ENCODE measurements at regions of chr6 and their contacts with region 1.

Region 1: GRCh38 chr6:111210194-111210728 is 123.0 kb downstream of the SLC16A10 start:
- DNase-seq: peak in 4 of 9 experiments; percentile 29 to 73 (median 58)
- ATAC-seq: peak; percentile 83
- H3K4me3 ChIP-seq: no peak overlapping the region
- H3K4me3 Mint-ChIP-seq: no peak overlapping the region
- H3K27ac ChIP-seq: no peak overlapping the region
- H3K27ac Mint-ChIP-seq: peak overlapping the region; percentile 10
- H3K4me1 ChIP-seq: no peaks in the 10 kb centered on the region
- H3K4me1 Mint-ChIP-seq: peaks cover 5% of the 10 kb centered on the region
- H3K27me3 ChIP-seq: no peaks in the 10 kb centered on the region
- H3K27me3 Mint-ChIP-seq: no peaks in the 10 kb centered on the region
- CTCF ChIP-seq: peak; percentile 77

Region 2: GRCh38 chr6:110528101-110528929 is 681.9 kb before region 1 on chr6:
- CTCF ChIA-PET with region 1: no interaction called
- POLR2A ChIA-PET with region 1: no interaction called
- intact Hi-C with region 1: loop called in 1 of 2 experiments (anchors 2 kb)
- DNase-seq: peak in 7 of 9 experiments; percentile 22 to 75 (median 53)
- ATAC-seq: peak; percentile 56
- H3K4me3 ChIP-seq: no peak overlapping the region
- H3K4me3 Mint-ChIP-seq: no peak overlapping the region
- H3K27ac ChIP-seq: no peak overlapping the region
- H3K27ac Mint-ChIP-seq: no peak overlapping the region
- H3K4me1 ChIP-seq: no peaks in the 10 kb centered on the region
- H3K4me1 Mint-ChIP-seq: no peaks in the 10 kb centered on the region
- H3K27me3 ChIP-seq: no peaks in the 10 kb centered on the region
- H3K27me3 Mint-ChIP-seq: peaks cover 3% of the 10 kb centered on the region
- CTCF ChIP-seq: peak; percentile 87

Region 3: DNA sequence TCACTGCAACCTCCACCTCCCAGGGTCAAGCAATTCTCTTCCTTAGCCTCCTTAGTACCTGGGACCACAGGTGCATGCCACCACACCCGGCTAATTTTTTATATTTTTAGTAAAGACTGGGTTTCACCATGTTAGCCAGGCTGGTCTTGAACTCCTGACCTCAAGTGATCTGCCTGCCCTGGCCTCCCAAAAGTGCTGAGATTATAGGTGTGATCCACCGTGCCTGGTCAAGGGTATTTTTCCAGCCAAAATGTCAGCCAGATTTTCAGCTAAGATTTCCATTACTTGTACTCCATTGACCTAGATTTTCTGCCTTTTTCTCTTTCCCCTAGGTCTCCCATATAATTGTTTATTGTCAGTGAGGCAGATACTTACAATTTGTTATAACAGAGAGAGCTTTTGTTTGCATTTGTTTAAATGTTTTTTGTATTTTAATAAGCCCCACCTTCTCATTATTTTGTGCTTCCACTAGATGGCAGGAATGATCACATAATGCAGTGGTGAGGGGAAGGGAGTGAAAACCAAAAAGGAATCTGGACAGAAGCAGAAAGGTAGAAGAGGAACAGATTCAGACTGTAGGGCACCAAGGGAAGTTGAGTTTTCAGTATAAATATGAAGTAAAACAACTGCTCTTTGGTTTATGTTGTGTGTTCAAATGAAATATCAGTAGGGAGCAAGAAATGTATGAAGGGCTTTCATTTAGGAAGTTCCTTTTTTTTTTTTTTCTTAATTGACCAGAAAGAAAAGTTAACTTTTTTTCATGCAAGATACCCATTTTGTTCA is 198.7 kb before region 1 on chr6:
- CTCF ChIA-PET with region 1: interaction called, 9 read pairs
- POLR2A ChIA-PET with region 1: no interaction called
- intact Hi-C with region 1: loop called (anchors 1 kb)
- DNase-seq: peak in 2 of 9 experiments; percentile 45 to 62
- ATAC-seq: peak; percentile 69
- H3K4me3 ChIP-seq: no peak overlapping the region
- H3K4me3 Mint-ChIP-seq: no peak overlapping the region
- H3K27ac ChIP-seq: no peak overlapping the region
- H3K27ac Mint-ChIP-seq: no peak overlapping the region
- H3K4me1 ChIP-seq: no peaks in the 10 kb centered on the region
- H3K4me1 Mint-ChIP-seq: peaks cover 4% of the 10 kb centered on the region
- H3K27me3 ChIP-seq: no peaks in the 10 kb centered on the region
- H3K27me3 Mint-ChIP-seq: no peaks in the 10 kb centered on the region
- CTCF ChIP-seq: peak; percentile 71

Region 4: GRCh38 chr6:111052036-111052570 is 158.2 kb before region 1 on chr6:
- CTCF ChIA-PET with region 1: interaction called, 118 read pairs
- POLR2A ChIA-PET with region 1: no interaction called
- intact Hi-C with region 1: loop called (anchors 1 kb)
- DNase-seq: no peak
- ATAC-seq: no peak
- H3K4me3 ChIP-seq: no peak overlapping the region
- H3K4me3 Mint-ChIP-seq: no peak overlapping the region
- H3K27ac ChIP-seq: no peak overlapping the region
- H3K27ac Mint-ChIP-seq: no peak overlapping the region
- H3K4me1 ChIP-seq: no peaks in the 10 kb centered on the region
- H3K4me1 Mint-ChIP-seq: no peaks in the 10 kb centered on the region
- H3K27me3 ChIP-seq: no peaks in the 10 kb centered on the region
- H3K27me3 Mint-ChIP-seq: peaks cover 2% of the 10 kb centered on the region
- CTCF ChIP-seq: no peak

Region 5: DNA sequence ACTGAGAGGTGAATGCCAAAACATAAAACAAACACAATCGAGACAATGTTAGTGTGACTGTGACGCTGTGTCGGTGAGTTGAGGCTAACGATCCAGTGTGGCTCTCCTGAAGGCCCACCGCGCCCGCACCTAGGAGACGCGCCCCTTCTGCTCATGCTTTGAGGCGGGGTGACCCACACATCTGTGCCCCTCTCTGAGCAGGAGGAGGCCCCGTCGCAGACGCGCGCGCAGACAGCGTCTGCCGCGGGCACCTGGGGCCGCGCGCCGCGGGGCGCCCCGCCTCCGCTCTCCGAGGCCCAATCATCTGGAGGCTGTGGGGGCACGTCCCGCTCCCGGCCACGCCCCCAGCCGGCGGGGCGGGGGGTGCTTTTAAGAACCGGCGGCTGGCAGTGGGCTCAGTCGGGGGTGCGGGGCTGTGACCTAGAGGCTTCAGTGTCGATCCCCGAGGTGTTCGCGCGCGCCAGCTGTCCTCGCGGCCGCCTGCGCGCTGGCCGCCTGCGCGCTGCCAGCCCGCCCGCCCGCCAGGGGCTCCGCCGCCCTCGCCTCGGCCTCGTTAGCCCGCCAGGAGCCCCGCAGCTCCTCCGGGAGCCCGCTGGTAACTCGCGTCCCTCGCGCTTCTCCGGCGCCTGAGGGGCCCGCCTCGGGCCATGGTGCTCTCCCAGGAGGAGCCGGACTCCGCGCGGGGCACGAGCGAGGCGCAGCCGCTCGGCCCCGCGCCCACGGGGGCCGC is 123.0 kb before region 1 on chr6 and contains the start of gene SLC16A10:
- CTCF ChIA-PET with region 1: interaction called, 5 read pairs
- POLR2A ChIA-PET with region 1: interaction called, 3 read pairs
- intact Hi-C with region 1: loop called (anchors 1 kb)
- DNase-seq: peak; percentile 70 to 92 (median 83)
- ATAC-seq: peak; percentile 86
- H3K4me3 ChIP-seq: peak within 1 kb of the TSS; percentile 56 to 70
- H3K4me3 Mint-ChIP-seq: peak within 1 kb of the TSS; percentile 96
- H3K27ac ChIP-seq: peak within 1 kb of the TSS; percentile 44 to 55
- H3K27ac Mint-ChIP-seq: peak within 1 kb of the TSS; percentile 96
- H3K4me1 ChIP-seq: peaks cover 25% of the 10 kb centered on the region
- H3K4me1 Mint-ChIP-seq: peaks cover 46% of the 10 kb centered on the region
- H3K27me3 ChIP-seq: no peaks in the 10 kb centered on the region
- H3K27me3 Mint-ChIP-seq: peaks cover 2% of the 10 kb centered on the region
- CTCF ChIP-seq: no peak
- total RNA-seq, gene SLC16A10: 15.7 to 18.5 TPM

Region 6: DNA sequence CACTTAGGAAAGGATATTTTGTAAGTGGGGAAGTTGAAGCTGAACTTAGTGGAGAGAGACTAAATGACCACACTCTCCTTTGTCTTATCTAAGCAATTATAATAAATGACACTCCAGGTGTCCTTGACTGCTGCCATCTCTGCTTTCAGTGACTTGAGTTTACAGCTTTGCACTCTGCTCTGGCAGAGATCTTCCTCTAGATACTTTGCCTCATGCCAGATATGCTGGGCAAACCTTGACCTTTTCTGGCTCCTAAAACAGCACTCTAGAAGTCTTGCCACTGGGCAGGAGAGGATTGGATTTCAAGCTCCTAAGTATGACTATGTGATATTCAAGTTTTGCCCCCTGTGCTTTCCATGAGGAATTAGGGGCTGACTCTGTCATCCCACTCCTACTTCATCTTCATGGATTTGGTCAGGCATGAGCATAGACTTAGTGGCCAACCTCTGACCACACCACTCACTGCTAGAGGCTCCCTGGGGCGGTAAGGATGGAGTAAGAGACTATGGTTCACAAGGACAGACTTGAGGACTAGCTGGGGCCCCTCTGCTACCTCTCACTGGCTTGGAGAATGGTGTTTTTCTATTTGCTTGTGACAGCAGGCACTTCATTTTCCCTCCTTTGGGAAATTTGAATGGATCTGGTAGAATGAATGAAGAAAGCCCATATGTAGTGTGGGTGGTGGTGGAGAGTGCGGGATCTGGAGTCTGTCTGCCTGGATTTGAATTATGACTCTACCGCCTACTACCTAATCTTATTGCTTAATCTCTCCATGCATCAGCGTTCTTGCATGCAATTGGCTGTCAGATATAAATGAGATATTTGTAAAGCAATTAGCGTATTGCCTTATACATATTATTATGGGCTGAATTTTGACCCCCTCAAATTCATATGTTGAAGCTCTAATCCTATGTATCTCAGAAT is 81.3 kb after region 1 on chr6:
- CTCF ChIA-PET with region 1: no interaction called
- POLR2A ChIA-PET with region 1: no interaction called
- intact Hi-C with region 1: no loop called
- DNase-seq: no peak
- ATAC-seq: no peak
- H3K4me3 ChIP-seq: no peak overlapping the region
- H3K4me3 Mint-ChIP-seq: no peak overlapping the region
- H3K27ac ChIP-seq: no peak overlapping the region
- H3K27ac Mint-ChIP-seq: no peak overlapping the region
- H3K4me1 ChIP-seq: peaks cover 7% of the 10 kb centered on the region
- H3K4me1 Mint-ChIP-seq: peaks cover 13% of the 10 kb centered on the region
- H3K27me3 ChIP-seq: no peaks in the 10 kb centered on the region
- H3K27me3 Mint-ChIP-seq: no peaks in the 10 kb centered on the region
- CTCF ChIP-seq: no peak

Measured in CD8-positive, alpha-beta T cell (primary cell).